ENCODE measurements at regions of chr5 and their contacts with region 1.

Region 1: DNA sequence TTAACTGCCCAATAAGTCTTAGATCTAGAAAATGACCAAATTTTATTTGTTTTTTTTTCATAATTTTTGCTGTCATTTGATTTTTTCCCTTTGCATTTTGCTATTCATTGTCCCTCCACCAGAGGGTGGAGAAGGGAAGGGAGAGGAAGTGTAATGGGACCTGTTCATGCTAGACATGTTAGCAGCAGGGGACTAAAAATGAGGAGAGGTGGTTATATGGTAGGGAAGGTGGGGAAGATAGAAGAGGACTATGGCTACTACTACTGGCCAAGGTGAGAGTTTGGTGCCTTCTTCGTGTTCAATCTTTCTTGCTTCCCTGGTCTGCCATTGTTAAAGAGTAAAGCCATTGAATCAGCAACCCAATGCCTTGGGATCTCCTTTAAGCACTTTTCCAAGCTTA is 6.4 kb downstream of the GRIA1 start:
- DNase-seq: no peak
- ATAC-seq: peak in 1 of 4 donors; percentile 60
- H3K4me3 ChIP-seq: no peak overlapping the region
- H3K27ac ChIP-seq: no peak overlapping the region
- H3K4me1 ChIP-seq: no peaks in the 10 kb centered on the region
- H3K27me3 ChIP-seq: peaks cover 0 to 18% (median 5%) of the 10 kb centered on the region in 9 donors
- CTCF ChIP-seq: peak; percentile 54 to 85 (median 72)
- POLR2A ChIP-seq: no peak

Region 2: DNA sequence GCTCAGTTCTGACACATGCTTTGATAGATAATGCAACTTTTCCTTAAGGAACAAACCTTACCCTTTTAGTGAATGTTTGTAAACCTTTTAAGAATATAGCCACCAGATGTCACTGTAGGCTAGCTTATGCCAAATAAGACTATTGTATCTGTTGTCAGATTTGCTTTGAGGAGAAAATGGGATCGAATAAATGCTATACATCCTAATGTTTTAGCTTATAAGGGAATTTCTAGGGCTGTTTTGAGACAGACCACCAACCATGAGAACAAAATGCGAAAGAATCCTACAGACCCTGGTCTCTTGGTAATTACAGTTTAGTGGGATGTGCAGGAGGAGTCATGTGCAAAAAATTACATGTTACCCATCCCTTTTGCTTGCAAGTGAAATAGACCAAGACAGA is 964.1 kb before region 1 on chr5:
- intact Hi-C with region 1: loop called in 1 of 10 experiments (anchors 10 kb)
- DNase-seq: no peak
- ATAC-seq: no peak
- H3K4me3 ChIP-seq: no peak overlapping the region
- H3K27ac ChIP-seq: no peak overlapping the region
- H3K4me1 ChIP-seq: peaks cover 0 to 6% (median 0%) of the 10 kb centered on the region in 12 donors
- H3K27me3 ChIP-seq: no peaks in the 10 kb centered on the region
- CTCF ChIP-seq: peak; percentile 16 to 69 (median 56)
- POLR2A ChIP-seq: no peak

Region 3: DNA sequence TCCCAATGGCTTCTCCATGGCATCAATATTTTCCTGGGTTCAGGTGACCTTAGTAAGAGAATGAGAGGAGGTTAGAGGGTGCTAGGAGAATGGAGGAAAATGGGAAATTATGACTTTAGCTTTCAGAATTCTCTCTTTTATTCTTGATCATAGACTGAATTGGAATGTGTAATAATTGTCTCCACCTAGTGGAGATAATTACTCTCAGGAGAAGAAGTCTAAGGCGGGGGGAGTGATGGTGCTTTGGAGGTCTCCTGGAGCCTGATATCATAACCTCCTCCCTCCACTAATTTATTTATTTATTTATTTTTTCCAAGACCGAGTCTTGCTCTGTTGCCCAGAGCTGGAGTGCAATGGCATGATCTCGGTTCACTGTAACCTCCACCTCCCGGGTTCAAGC is 214.9 kb after region 1 on chr5:
- intact Hi-C with region 1: loop called in 9 of 10 experiments (anchors 2 to 10 kb)
- DNase-seq: no peak
- ATAC-seq: no peak
- H3K4me3 ChIP-seq: no peak overlapping the region
- H3K27ac ChIP-seq: no peak overlapping the region
- H3K4me1 ChIP-seq: no peaks in the 10 kb centered on the region
- H3K27me3 ChIP-seq: no peaks in the 10 kb centered on the region
- CTCF ChIP-seq: peak in 9 of 12 donors; percentile 10 to 51 (median 29)
- POLR2A ChIP-seq: no peak

Region 4: DNA sequence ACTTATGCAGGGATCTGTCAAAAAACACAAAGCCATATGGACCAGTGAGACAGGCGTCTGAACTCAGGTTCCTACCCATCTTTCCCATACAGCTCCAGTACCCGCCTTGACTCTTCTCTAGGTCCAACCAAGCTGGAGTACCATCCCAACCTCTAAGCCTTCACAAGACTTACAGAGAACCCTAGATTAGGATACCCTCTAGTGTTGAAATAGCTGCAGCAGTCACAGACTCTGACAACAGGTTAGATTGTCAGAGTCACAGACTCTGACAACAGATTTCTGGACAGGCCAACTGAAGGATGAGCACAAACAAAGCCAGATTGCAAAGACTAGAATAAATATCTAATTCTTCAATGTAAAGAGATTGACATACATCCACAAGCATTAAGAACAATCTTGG is 259.7 kb after region 1 on chr5:
- intact Hi-C with region 1: loop called in 1 of 10 experiments (anchors 10 kb)
- DNase-seq: no peak
- ATAC-seq: no peak
- H3K4me3 ChIP-seq: no peak overlapping the region
- H3K27ac ChIP-seq: no peak overlapping the region
- H3K4me1 ChIP-seq: no peaks in the 10 kb centered on the region
- H3K27me3 ChIP-seq: no peaks in the 10 kb centered on the region
- CTCF ChIP-seq: peak in 2 of 12 donors; percentile 10 to 11
- POLR2A ChIP-seq: no peak

Region 5: DNA sequence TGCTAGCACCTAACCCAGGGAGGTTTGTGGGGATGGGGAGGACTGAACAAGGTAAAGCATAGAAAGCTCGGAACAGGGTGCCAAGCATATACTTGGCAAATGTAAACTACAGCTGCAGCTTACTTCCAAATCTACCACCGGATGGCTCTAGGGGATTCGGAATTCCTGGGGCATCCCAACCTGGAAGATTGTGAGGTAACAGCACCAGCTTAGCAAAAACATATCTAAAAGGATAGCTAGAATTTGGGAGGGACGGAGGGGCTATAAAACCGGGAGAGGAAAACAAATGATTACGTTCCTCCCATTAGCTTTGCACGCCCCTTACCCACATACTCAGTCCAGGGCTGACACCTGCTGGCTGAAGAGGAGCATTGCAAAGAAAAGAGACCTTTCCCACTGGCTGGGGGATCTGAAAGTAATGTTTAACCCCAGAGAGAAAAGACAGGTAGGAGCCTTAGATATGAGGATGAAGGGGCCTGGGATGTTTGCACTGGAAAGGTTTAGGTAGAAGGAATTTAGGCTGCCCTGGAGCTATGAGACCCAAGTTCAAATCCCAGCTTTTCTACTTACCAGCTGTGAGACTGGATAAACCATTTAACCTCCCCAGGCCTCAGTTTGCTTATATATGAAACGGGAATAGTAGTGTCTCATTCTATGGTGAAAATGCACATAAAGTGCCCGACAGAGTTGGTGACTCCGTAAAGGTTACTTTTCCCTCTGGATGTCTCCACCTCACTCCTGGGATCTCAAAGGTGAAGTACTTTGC is 468.2 kb after region 1 on chr5:
- intact Hi-C with region 1: loop called (anchors 1 to 5 kb)
- DNase-seq: peak in 2 of 5 donors; percentile 35 to 39
- ATAC-seq: peak; percentile 60 to 82 (median 76)
- H3K4me3 ChIP-seq: peak overlapping the region in 2 of 12 donors; percentile 34 to 37
- H3K27ac ChIP-seq: no peak overlapping the region
- H3K4me1 ChIP-seq: peaks cover 0 to 9% (median 0%) of the 10 kb centered on the region in 12 donors
- H3K27me3 ChIP-seq: no peaks in the 10 kb centered on the region
- CTCF ChIP-seq: peak; percentile 70 to 93 (median 87)
- POLR2A ChIP-seq: no peak